ENCODE measurements at regions of chr12 and their contacts with region 1.

Region 1: GRCh38 chr12:32698285-32698684 is 19.2 kb downstream of the DNM1L start:
- DNase-seq: peak; percentile 24
- H3K4me3 ChIP-seq: no peak overlapping the region
- H3K27ac ChIP-seq: no peak overlapping the region
- H3K4me1 ChIP-seq: peaks cover 14% of the 10 kb centered on the region
- H3K27me3 ChIP-seq: no peaks in the 10 kb centered on the region
- CTCF ChIP-seq: no peak

Region 2: GRCh38 chr12:32478858-32479725 is 219.2 kb before region 1 on chr12:
- CTCF ChIA-PET with region 1: no interaction called
- POLR2A ChIA-PET with region 1: interaction called, 14 read pairs
- intact Hi-C with region 1: no loop called
- DNase-seq: no peak
- H3K4me3 ChIP-seq: no peak overlapping the region
- H3K27ac ChIP-seq: no peak overlapping the region
- H3K4me1 ChIP-seq: peaks cover 14% of the 10 kb centered on the region
- H3K27me3 ChIP-seq: no peaks in the 10 kb centered on the region
- CTCF ChIP-seq: no peak

Region 3: GRCh38 chr12:32533971-32534590 is 164.2 kb before region 1 on chr12:
- CTCF ChIA-PET with region 1: no interaction called
- POLR2A ChIA-PET with region 1: no interaction called
- intact Hi-C with region 1: no loop called
- DNase-seq: peak; percentile 42
- H3K4me3 ChIP-seq: peak overlapping the region; percentile 35
- H3K27ac ChIP-seq: peak overlapping the region; percentile 3
- H3K4me1 ChIP-seq: peaks cover 35% of the 10 kb centered on the region
- H3K27me3 ChIP-seq: no peaks in the 10 kb centered on the region
- CTCF ChIP-seq: no peak

Region 4: DNA sequence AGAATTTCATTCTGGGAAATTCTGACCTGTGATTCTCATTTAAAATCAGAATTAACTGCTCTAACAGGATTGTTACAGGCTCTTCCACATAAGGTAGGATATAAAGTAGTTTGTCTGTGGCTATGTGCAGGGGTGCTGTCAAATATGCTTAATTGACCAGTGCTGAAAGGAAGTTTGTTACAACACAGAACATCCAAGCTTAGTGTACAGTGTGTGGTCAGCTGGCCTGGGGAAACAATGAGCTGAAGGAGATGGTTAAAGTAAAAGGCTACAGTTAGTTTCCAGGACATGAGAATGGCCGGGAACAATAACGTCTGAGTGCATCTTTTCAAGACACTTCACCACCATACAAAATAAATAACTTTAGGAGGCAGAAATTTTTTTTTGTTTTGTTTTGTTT is 130.3 kb after region 1 on chr12:
- CTCF ChIA-PET with region 1: no interaction called
- POLR2A ChIA-PET with region 1: no interaction called
- intact Hi-C with region 1: no loop called
- DNase-seq: no peak
- H3K4me3 ChIP-seq: no peak overlapping the region
- H3K27ac ChIP-seq: no peak overlapping the region
- H3K4me1 ChIP-seq: no peaks in the 10 kb centered on the region
- H3K27me3 ChIP-seq: no peaks in the 10 kb centered on the region
- CTCF ChIP-seq: no peak

Region 5: DNA sequence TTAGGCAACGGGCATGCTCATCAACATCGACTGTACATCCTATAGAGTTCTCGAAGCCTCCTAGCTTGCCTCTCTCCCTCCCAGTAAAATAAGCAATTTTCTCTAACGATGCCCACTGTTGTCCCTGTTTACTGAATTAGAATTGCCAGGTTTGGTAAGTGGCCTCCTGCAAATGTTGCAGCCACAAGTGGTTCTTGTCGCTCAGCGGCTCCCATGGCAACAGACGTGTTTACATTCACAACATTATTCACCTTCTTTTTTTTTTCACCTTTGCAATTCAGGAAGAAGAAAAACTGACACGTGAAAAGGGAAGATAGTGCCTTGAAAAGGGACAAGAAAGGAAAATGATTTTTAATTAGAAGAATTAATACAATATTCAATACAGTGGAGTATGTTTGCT is 299.2 kb after region 1 on chr12:
- CTCF ChIA-PET with region 1: no interaction called
- POLR2A ChIA-PET with region 1: no interaction called
- intact Hi-C with region 1: no loop called
- DNase-seq: no peak
- H3K4me3 ChIP-seq: no peak overlapping the region
- H3K27ac ChIP-seq: no peak overlapping the region
- H3K4me1 ChIP-seq: no peaks in the 10 kb centered on the region
- H3K27me3 ChIP-seq: no peaks in the 10 kb centered on the region
- CTCF ChIP-seq: no peak

Region 6: DNA sequence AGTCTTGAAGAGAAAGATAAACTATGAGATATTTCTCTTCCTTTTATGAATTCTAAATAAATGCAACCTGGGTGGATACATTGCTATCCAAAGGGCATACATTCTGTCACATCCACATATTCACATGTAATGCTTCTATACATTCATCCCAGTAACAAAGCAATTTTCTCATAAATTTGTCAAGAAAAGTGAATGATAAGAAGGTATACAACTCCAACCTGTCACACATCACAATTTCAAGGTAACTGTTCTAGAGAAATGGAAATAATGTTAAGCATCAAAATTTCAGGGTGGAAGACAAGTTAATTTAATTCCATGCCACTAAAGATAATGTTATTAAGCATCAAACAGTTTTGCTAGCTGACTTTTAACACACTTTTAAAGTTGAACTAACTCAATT is 528.4 kb after region 1 on chr12:
- CTCF ChIA-PET with region 1: no interaction called
- POLR2A ChIA-PET with region 1: no interaction called
- intact Hi-C with region 1: no loop called
- DNase-seq: no peak
- H3K4me3 ChIP-seq: no peak overlapping the region
- H3K27ac ChIP-seq: no peak overlapping the region
- H3K4me1 ChIP-seq: no peaks in the 10 kb centered on the region
- H3K27me3 ChIP-seq: no peaks in the 10 kb centered on the region
- CTCF ChIP-seq: no peak